Naive thymus-derived CD8-positive, alpha-beta T cell (primary cell): ENCODE measurements at regions of chr10 and their contacts with region 1.

Region 1: DNA sequence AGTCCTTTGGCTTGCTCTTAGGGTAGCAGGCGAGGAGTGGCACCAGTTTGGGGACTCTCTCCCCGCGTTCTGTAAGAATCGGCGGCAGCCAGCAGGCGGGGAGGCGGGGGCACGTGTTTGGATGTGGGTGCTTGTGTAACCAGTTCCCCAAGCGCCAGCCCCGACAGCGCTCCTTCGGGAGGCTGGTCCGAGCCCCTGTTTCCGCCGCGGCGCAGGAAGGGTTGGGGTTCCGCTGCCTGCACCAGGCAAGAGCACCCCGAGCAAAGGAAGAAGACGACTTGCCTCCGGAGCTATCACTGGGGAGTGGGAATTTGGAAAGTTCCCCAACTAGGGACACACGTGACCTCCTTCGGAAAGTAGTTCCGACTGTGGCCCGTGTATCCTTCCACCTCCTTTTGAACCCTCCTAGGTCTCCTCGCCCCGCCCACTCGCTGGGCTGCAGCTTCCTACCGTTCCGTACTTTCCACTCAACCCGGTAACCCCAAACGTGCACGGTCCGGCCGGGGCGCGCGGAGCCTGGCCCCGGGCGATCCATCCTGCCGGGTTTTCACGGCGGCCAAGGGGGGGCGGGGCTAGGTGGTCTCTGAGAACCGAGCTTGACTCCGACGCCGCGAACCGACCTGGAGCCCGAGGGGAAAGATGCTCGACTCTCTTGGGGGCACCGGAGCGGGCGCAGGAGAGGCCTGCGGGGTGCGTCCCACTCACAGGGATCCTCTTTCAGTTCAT is 1.2 kb downstream of the KLLN start:
- DNase-seq: peak; percentile 82 to 97 (median 92)
- ATAC-seq: peak; percentile 60 to 70
- H3K4me3 Mint-ChIP-seq: peak overlapping the region; percentile 93 to 100 (median 98)
- H3K27ac Mint-ChIP-seq: peak overlapping the region; percentile 94 to 99 (median 98)
- H3K4me1 Mint-ChIP-seq: peaks cover 28 to 55% (median 36%) of the 10 kb centered on the region in 4 donors
- H3K27me3 Mint-ChIP-seq: peaks cover 0 to 3% (median 0%) of the 10 kb centered on the region in 5 donors

Region 2: DNA sequence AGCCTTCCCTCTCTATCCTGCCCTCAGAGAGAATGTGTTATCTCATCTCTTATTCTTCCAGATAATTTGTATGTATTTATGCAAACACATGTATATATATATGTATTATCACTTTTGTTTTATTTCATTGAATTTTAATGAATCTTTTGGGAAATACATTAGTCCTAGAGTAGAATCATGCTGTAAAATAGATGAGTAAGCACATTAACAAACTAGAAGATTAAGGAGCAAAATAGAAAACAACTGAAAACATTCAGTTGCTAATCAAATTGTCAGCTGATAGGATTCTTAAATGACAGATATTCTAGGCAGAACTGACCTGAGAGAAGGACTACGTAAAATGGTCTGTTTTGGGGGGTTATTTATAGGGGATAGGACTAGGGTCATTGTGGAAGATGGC is 10.0 kb before region 1 on chr10:
- POLR2A ChIA-PET with region 1: interaction called, 12 read pairs
- DNase-seq: no peak
- ATAC-seq: no peak
- H3K4me3 Mint-ChIP-seq: no peak overlapping the region
- H3K27ac Mint-ChIP-seq: no peak overlapping the region
- H3K4me1 Mint-ChIP-seq: peaks cover 4 to 22% (median 17%) of the 10 kb centered on the region in 4 donors
- H3K27me3 Mint-ChIP-seq: no peaks in the 10 kb centered on the region

Region 3: GRCh38 chr10:88064608-88065382 is 202.7 kb after region 1 on chr10:
- POLR2A ChIA-PET with region 1: interaction called, 65 read pairs
- DNase-seq: peak in 8 of 10 donors; percentile 40 to 91 (median 74)
- ATAC-seq: peak; percentile 92 to 93
- H3K4me3 Mint-ChIP-seq: peak overlapping the region in 8 of 10 donors; percentile 23 to 75 (median 72)
- H3K27ac Mint-ChIP-seq: peak overlapping the region; percentile 83 to 99 (median 96)
- H3K4me1 Mint-ChIP-seq: peaks cover 46 to 79% (median 76%) of the 10 kb centered on the region in 4 donors
- H3K27me3 Mint-ChIP-seq: no peaks in the 10 kb centered on the region

Region 4: DNA sequence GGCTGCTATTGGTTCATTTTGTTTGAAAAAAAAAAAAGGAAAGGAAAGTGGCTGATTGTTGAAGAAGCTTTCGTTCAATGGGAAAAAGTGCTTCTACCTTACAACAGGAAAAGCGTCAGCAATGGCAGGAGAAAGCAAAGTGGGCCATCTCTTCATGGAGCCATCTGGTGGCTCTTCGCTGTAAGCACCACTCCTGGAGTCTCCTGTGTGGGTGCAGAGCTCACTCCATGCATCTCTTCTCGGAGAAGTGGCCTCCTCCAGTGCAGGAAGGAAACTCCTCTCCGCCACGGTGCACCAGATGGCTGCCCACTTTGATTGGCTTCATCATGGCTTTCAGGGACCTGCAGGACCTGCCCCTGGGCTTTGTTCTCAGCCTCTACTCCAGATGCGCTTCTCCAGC is 252.3 kb after region 1 on chr10:
- POLR2A ChIA-PET with region 1: interaction called, 42 read pairs
- DNase-seq: peak in 1 of 10 donors; percentile 24
- ATAC-seq: peak; percentile 51 to 62
- H3K4me3 Mint-ChIP-seq: no peak overlapping the region
- H3K27ac Mint-ChIP-seq: peak overlapping the region in 2 of 10 donors; percentile 16 to 44
- H3K4me1 Mint-ChIP-seq: peaks cover 6 to 26% (median 15%) of the 10 kb centered on the region in 4 donors
- H3K27me3 Mint-ChIP-seq: no peaks in the 10 kb centered on the region

Region 5: GRCh38 chr10:88386821-88387773 is 525.0 kb after region 1 on chr10:
- POLR2A ChIA-PET with region 1: interaction called, 163 read pairs
- DNase-seq: peak in 8 of 10 donors; percentile 2 to 65 (median 35)
- ATAC-seq: peak; percentile 40 to 51
- H3K4me3 Mint-ChIP-seq: no peak overlapping the region
- H3K27ac Mint-ChIP-seq: no peak overlapping the region
- H3K4me1 Mint-ChIP-seq: peaks cover 14 to 31% (median 25%) of the 10 kb centered on the region in 4 donors
- H3K27me3 Mint-ChIP-seq: no peaks in the 10 kb centered on the region

Region 6: GRCh38 chr10:88582806-88583583 is 720.9 kb after region 1 on chr10 and contains the start of gene RNLS:
- POLR2A ChIA-PET with region 1: interaction called, 28 read pairs
- DNase-seq: peak; percentile 36 to 81 (median 64)
- ATAC-seq: peak; percentile 89 to 90
- H3K4me3 Mint-ChIP-seq: peak within 1 kb of the TSS; percentile 86 to 96 (median 92)
- H3K27ac Mint-ChIP-seq: peak within 1 kb of the TSS; percentile 89 to 96 (median 93)
- H3K4me1 Mint-ChIP-seq: peaks cover 6 to 14% (median 11%) of the 10 kb centered on the region in 4 donors
- H3K27me3 Mint-ChIP-seq: peaks cover 0 to 2% (median 0%) of the 10 kb centered on the region in 5 donors
- polyA plus RNA-seq, gene RNLS: 2.6 to 3.8 (median 3.7) TPM